Right cardiac atrium (tissue), 5 donors: ENCODE measurements at regions of chr7 and their contacts with region 1.

Region 1: GRCh38 chr7:1059200-1060091 is 15.1 kb downstream of the GPR146 start:
- DNase-seq: peak; percentile 58 to 83 (median 77)
- ATAC-seq: peak; percentile 39 to 72
- H3K4me3 ChIP-seq: no peak overlapping the region
- H3K27ac ChIP-seq: no peak overlapping the region
- H3K4me1 ChIP-seq: peaks cover 9% of the 10 kb centered on the region
- H3K27me3 ChIP-seq: no peaks in the 10 kb centered on the region

Region 2: GRCh38 chr7:1012004-1012715 is 47.3 kb before region 1 on chr7:
- intact Hi-C with region 1: loop called in 1 of 4 experiments (anchors 5 kb)
- DNase-seq: no peak
- ATAC-seq: no peak
- H3K4me3 ChIP-seq: no peak overlapping the region
- H3K27ac ChIP-seq: no peak overlapping the region
- H3K4me1 ChIP-seq: no peaks in the 10 kb centered on the region
- H3K27me3 ChIP-seq: no peaks in the 10 kb centered on the region

Region 3: GRCh38 chr7:1159891-1160668 is 100.6 kb after region 1 on chr7 and contains the start of gene ZFAND2A:
- intact Hi-C with region 1: no loop called
- DNase-seq: peak; percentile 99 to 100 (median 100)
- ATAC-seq: peak; percentile 99
- H3K4me3 ChIP-seq: peak within 1 kb of the TSS; percentile 66
- H3K27ac ChIP-seq: peak within 1 kb of the TSS; percentile 76
- H3K4me1 ChIP-seq: no peaks in the 10 kb centered on the region
- H3K27me3 ChIP-seq: no peaks in the 10 kb centered on the region
- total RNA-seq, gene ZFAND2A: 8.9 to 13.2 (median 11.5) TPM